ENCODE measurements at regions of chr20 and their contacts with region 1.

Region 1: GRCh38 chr20:40654876-40655275 is 34.2 kb downstream of the MAFB start:
- DNase-seq: no peak
- H3K4me3 ChIP-seq: no peak overlapping the region
- CTCF ChIP-seq: no peak

Region 2: DNA sequence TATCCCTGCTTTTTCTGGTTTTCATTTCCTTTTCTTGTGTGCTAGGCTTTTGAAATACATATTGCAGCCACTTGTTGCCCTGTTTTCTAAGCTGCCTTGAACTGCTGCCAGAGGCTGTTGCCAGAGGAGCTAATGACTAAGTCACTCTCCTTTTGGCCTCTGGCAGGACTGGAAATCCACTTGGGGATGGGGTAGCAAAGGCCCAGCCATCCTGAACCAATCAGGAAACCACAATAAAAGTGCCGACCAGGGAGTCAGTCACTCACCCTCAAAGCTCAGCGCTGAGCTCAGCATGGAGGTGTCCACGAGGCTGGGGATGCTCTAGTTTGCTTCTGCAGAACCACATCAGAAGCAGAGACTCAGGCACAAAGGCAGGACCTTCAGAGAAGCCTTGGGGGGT is 879.8 kb before region 1 on chr20:
- in situ Hi-C with region 1: loop called (anchors 25 kb)
- DNase-seq: peak; percentile 98
- H3K4me3 ChIP-seq: no peak overlapping the region
- CTCF ChIP-seq: no peak

Region 3: DNA sequence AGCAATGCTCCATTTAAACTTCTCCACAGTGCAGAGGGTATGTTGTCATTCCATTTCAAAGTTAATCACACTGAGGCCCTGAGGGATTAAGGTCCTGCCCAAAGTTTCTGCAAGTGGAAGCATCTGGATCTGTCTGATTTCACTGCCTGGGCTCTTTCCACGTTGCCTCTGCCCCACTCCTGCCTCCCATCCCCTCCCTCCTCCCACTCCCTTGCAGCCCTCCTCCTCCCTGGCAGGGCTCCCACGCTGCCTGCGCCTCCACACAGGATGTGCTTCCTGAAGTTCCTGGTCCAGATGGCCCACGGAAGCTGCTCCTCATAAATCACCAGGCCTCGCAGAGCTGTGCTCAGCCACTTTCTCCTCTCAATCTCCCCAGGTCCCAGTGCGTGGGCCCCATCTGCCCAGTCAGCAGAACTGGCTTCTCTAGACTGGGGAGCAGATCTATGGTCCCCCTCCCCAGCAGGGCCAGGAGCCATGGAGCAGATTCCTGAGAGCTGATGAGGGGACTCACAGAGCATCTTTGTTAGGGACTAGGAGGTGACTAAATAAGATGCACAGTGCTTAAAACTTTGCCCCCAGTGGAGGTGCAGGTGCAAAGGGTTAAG is 99.6 kb after region 1 on chr20:
- in situ Hi-C with region 1: no loop called
- DNase-seq: no peak
- H3K4me3 ChIP-seq: no peak overlapping the region
- CTCF ChIP-seq: no peak

Measured in astrocyte of the cerebellum (primary cell).